ENCODE measurements at regions of chr2 and their contacts with region 1.

Region 1: DNA sequence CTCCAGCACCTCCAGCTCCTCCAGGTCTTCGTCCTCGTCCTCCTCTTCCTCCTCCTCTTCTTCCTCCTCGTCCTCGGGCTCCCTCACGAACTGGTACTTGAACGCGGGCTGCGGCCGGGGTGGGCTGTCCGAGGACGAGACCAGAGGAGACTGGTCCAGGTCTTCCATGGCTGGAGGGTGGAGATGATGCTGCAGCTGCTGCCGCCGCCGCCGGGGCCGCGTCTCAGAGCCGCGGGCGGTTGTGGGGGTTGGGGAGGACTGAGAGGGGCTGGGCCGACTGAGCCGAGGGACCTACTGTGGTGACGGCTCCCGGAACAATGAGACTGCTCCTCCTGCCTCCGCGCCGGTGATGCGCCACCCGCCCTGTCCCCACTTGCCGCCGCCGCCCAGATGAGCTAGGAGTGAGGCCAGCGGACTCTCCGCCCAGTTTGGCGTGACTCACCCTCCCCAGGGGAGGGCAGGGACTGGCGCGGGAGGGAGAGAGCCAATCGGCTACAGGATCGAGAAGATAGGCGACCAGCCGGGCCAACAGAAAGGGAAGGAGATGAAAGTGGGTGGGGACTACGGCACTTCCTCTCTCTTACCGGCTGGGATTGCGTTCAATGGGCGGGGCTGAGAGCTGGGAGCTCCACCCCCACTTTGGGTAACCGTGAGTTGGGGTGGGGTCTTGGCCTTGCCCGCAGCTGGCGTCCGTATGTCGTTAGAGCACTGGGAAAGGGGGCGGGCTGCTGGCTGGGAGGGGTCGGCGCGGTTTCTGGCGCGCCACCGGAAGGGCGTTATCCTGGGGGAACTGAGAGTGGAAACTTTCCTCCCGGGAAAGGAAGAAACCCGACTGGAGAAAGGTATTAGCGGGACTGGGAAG is at the start of gene RTN4:
- DNase-seq: peak; percentile 99
- H3K4me3 ChIP-seq: peak within 1 kb of the TSS; percentile 86 to 99 (median 97)
- H3K27ac ChIP-seq: peak within 1 kb of the TSS; percentile 97
- H3K4me1 ChIP-seq: peaks cover 38% of the 10 kb centered on the region
- H3K27me3 ChIP-seq: no peaks in the 10 kb centered on the region
- CTCF ChIP-seq: peak in 1 of 2 donors; percentile 26
- POLR2A ChIP-seq: peak; percentile 94
- total RNA-seq, gene RTN4: 472 and 486 TPM in 2 replicates

Region 2: GRCh38 chr2:54723131-54723995 is 327.0 kb before region 1 on chr2 and contains the start of gene EML6:
- CTCF ChIA-PET with region 1: no interaction called
- POLR2A ChIA-PET with region 1: no interaction called
- dilution Hi-C with region 1: no loop called
- intact Hi-C with region 1: loop called (anchors 10 kb)
- DNase-seq: peak; percentile 99
- H3K4me3 ChIP-seq: peak within 1 kb of the TSS; percentile 86 to 99 (median 96)
- H3K27ac ChIP-seq: peak within 1 kb of the TSS; percentile 78
- H3K4me1 ChIP-seq: peaks cover 22% of the 10 kb centered on the region
- H3K27me3 ChIP-seq: peaks cover 11 to 15% of the 10 kb centered on the region in 2 experiments
- CTCF ChIP-seq: peak; percentile 4 to 36
- POLR2A ChIP-seq: peak; percentile 88
- total RNA-seq, gene EML6: 1.3 and 2.1 TPM in 2 replicates

Region 3: GRCh38 chr2:55026202-55026601 is 24.2 kb before region 1 on chr2:
- CTCF ChIA-PET with region 1: interaction called, 10 read pairs
- POLR2A ChIA-PET with region 1: interaction called, 3 read pairs
- dilution Hi-C with region 1: no loop called
- intact Hi-C with region 1: no loop called
- DNase-seq: peak; percentile 22
- H3K4me3 ChIP-seq: no peak overlapping the region
- H3K27ac ChIP-seq: no peak overlapping the region
- H3K4me1 ChIP-seq: peaks cover 17% of the 10 kb centered on the region
- H3K27me3 ChIP-seq: no peaks in the 10 kb centered on the region
- CTCF ChIP-seq: no peak
- POLR2A ChIP-seq: no peak

Region 4: GRCh38 chr2:55093381-55093780 is 43.0 kb after region 1 on chr2:
- CTCF ChIA-PET with region 1: interaction called, 14 read pairs
- POLR2A ChIA-PET with region 1: interaction called, 5 read pairs
- dilution Hi-C with region 1: no loop called
- intact Hi-C with region 1: loop called (anchors 1 kb)
- DNase-seq: peak; percentile 83
- H3K4me3 ChIP-seq: no peak overlapping the region
- H3K27ac ChIP-seq: peak overlapping the region; percentile 90
- H3K4me1 ChIP-seq: peaks cover 38% of the 10 kb centered on the region
- H3K27me3 ChIP-seq: no peaks in the 10 kb centered on the region
- CTCF ChIP-seq: no peak
- POLR2A ChIP-seq: no peak

Region 5: GRCh38 chr2:55159037-55159651 is 108.8 kb after region 1 on chr2:
- CTCF ChIA-PET with region 1: interaction called, 129 read pairs
- POLR2A ChIA-PET with region 1: interaction called, 9 read pairs
- dilution Hi-C with region 1: no loop called
- intact Hi-C with region 1: loop called (anchors 1 kb)
- DNase-seq: peak; percentile 37
- H3K4me3 ChIP-seq: no peak overlapping the region
- H3K27ac ChIP-seq: no peak overlapping the region
- H3K4me1 ChIP-seq: peaks cover 52% of the 10 kb centered on the region
- H3K27me3 ChIP-seq: no peaks in the 10 kb centered on the region
- CTCF ChIP-seq: no peak
- POLR2A ChIP-seq: no peak

Region 6: DNA sequence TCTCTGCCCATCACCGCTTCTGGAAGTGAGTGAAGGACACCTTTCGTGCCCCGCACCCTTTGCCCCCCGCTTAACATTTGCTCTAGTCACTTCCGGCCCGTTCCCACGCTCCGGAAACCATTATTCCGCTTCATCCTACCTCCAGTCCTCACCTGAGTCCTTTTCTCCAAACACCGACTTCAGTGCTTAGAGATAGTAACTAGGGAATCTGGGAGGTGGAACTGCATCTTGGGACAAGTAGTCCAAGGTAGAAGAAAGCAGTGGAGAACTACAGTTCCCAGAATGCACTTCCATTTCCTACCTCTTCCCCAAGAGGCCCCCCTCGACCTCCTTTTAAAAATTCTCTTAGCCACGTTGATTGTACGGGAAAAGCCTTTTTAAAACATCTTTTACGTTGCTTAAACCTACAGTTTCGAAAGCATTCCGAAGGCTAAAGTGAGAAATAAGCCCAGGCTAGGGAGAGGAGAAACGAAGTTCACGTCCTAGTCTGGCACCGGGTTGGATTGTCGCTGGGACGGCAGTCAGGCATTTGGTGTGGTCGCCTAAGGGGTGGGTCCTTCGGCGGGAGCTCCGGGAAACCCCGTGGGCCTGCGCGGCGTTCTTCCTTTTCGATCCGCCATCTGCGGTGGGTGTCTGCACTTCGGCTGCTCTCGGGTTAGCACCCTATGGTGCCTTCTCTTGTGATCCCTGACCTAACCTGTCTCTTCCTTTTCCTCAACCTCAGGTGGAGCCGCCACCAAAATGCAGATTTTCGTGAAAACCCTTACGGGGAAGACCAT is 181.9 kb after region 1 on chr2 and contains the starts of genes CLHC1 and RPS27A:
- CTCF ChIA-PET with region 1: no interaction called
- POLR2A ChIA-PET with region 1: no interaction called
- dilution Hi-C with region 1: no loop called
- intact Hi-C with region 1: loop called (anchors 2 kb)
- DNase-seq: peak; percentile 92
- H3K4me3 ChIP-seq: peak within 1 kb of the TSS; percentile 83 to 96 (median 92)
- H3K27ac ChIP-seq: peak within 1 kb of the TSS; percentile 99
- H3K4me1 ChIP-seq: peaks cover 36% of the 10 kb centered on the region
- H3K27me3 ChIP-seq: no peaks in the 10 kb centered on the region
- CTCF ChIP-seq: no peak
- POLR2A ChIP-seq: peak; percentile 92
- total RNA-seq, gene CLHC1: 10.2 and 12.3 TPM in 2 replicates
- total RNA-seq, gene RPS27A: 926 and 939 TPM in 2 replicates

Region 7: GRCh38 chr2:56224316-56224715 is 1174.0 kb after region 1 on chr2:
- CTCF ChIA-PET with region 1: no interaction called
- POLR2A ChIA-PET with region 1: no interaction called
- dilution Hi-C with region 1: no loop called
- intact Hi-C with region 1: no loop called
- DNase-seq: peak; percentile 83
- H3K4me3 ChIP-seq: no peak overlapping the region
- H3K27ac ChIP-seq: no peak overlapping the region
- H3K4me1 ChIP-seq: peaks cover 21% of the 10 kb centered on the region
- H3K27me3 ChIP-seq: no peaks in the 10 kb centered on the region
- CTCF ChIP-seq: no peak
- POLR2A ChIP-seq: no peak